Activated CD8-positive, alpha-beta T cell treated with anti-CD3 and anti-CD28 coated beads for 36 hours (primary cell): ENCODE measurements at regions of chr1 and their contacts with region 1.

Region 1: DNA sequence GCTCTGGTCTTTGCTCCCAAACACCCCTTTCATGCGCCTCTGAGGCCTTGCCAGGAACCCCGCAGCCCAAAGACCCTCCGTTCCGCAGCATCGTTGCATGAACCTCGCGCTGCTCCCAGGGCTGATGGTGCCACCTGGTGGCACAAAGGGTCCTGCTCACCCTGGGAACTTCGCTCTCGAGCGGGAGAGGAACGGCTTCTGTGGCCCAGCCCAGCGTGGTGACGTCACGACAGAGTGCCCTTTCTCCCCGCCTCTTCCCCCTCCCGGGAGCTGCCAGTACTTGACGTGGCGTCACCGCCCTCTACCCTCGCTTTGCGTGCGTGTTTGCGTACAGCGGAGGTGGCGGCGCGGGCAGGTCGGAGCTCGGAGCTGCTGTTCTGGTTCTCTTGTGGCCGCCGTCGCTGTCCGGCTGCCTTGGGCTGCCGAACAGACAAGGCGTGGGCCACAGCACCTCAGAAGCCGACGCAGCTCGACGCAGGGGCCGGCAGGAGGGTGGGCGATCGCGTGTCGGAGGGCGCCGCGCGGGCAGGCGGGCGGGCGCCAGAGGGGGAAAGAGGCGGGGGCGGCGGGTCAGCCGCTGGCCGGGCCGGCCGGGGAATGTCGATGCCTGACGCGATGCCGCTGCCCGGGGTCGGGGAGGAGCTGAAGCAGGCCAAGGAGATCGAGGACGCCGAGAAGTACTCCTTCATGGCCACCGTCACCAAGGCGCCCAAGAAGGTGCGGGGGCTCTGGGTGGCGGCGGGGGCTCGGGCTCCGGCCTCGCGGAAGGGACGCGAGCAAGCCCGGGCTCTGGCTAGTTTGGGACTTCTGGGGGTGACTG is at the start of gene AHCYL1:
- DNase-seq: peak; percentile 100
- ATAC-seq: peak; percentile 99
- H3K4me3 Mint-ChIP-seq: peak within 1 kb of the TSS; percentile 98
- H3K27ac Mint-ChIP-seq: peak within 1 kb of the TSS; percentile 98
- H3K4me1 Mint-ChIP-seq: peaks cover 33% of the 10 kb centered on the region
- H3K27me3 Mint-ChIP-seq: no peaks in the 10 kb centered on the region
- CTCF ChIP-seq: peak; percentile 84
- total RNA-seq, gene AHCYL1: 77.8 to 79.1 TPM

Region 2: GRCh38 chr1:109516872-109517271 is 467.8 kb before region 1 on chr1:
- CTCF ChIA-PET with region 1: no interaction called
- POLR2A ChIA-PET with region 1: no interaction called
- intact Hi-C with region 1: no loop called
- DNase-seq: no peak
- ATAC-seq: no peak
- H3K4me3 Mint-ChIP-seq: no peak overlapping the region
- H3K27ac Mint-ChIP-seq: no peak overlapping the region
- H3K4me1 Mint-ChIP-seq: peaks cover 2% of the 10 kb centered on the region
- H3K27me3 Mint-ChIP-seq: no peaks in the 10 kb centered on the region
- CTCF ChIP-seq: no peak

Region 3: DNA sequence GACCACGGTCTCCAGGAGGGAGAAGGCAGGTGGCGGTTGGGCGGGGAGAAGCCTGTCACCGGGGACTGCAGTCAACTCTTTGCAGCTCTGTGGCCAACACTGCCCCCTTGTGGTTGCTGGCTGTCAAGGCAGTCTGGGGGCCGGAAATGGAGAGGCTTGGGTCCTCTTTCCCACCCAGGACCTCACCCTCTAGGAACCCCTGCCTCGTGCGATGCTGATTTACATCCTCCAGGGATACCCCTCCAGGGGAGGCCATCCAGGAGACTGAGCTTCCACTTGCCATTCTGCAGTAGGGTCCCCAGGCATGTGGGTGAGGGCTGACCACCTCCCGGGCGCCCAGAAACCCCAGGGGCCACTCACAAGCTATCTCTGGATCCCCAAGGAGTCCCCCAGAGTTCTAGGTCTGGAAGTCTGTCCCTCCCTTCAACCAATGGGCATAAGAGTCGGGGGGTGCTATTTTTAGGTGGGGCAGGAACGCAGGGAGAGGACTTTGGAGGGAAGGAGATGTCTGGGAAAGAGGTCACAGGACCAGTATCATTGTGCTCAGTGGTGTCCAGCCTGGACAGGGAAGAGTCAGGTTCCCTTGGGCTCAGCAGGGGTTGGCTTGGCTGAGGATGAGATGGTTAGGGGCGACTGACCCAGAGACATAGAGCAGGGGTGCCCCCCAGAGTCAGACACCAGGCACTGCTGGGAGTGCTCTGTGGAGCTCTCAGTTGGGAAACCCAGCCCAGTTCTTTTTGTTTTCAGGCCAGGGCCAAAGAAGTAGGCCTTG is 452.1 kb before region 1 on chr1:
- CTCF ChIA-PET with region 1: interaction called, 11 read pairs
- POLR2A ChIA-PET with region 1: no interaction called
- intact Hi-C with region 1: no loop called
- DNase-seq: peak; percentile 93
- ATAC-seq: peak; percentile 93
- H3K4me3 Mint-ChIP-seq: peak overlapping the region; percentile 57
- H3K27ac Mint-ChIP-seq: peak overlapping the region; percentile 90
- H3K4me1 Mint-ChIP-seq: peaks cover 23% of the 10 kb centered on the region
- H3K27me3 Mint-ChIP-seq: no peaks in the 10 kb centered on the region
- CTCF ChIP-seq: peak; percentile 79

Region 4: GRCh38 chr1:109655601-109656519 is 328.8 kb before region 1 on chr1 and contains the start of gene GSTM4:
- CTCF ChIA-PET with region 1: interaction called, 20 read pairs
- POLR2A ChIA-PET with region 1: interaction called, 9 read pairs
- intact Hi-C with region 1: no loop called
- DNase-seq: peak; percentile 81
- ATAC-seq: peak; percentile 94
- H3K4me3 Mint-ChIP-seq: peak within 1 kb of the TSS; percentile 78
- H3K27ac Mint-ChIP-seq: peak within 1 kb of the TSS; percentile 83
- H3K4me1 Mint-ChIP-seq: peaks cover 6% of the 10 kb centered on the region
- H3K27me3 Mint-ChIP-seq: peaks cover 2% of the 10 kb centered on the region
- CTCF ChIP-seq: no peak
- total RNA-seq, gene GSTM4: 8.3 to 10.5 TPM

Region 5: GRCh38 chr1:109796484-109797302 is 188.0 kb before region 1 on chr1:
- CTCF ChIA-PET with region 1: interaction called, 745 read pairs
- POLR2A ChIA-PET with region 1: interaction called, 14 read pairs
- intact Hi-C with region 1: no loop called
- DNase-seq: peak; percentile 28
- ATAC-seq: peak; percentile 54
- H3K4me3 Mint-ChIP-seq: no peak overlapping the region
- H3K27ac Mint-ChIP-seq: peak overlapping the region; percentile 73
- H3K4me1 Mint-ChIP-seq: peaks cover 71% of the 10 kb centered on the region
- H3K27me3 Mint-ChIP-seq: no peaks in the 10 kb centered on the region
- CTCF ChIP-seq: no peak

Region 6: DNA sequence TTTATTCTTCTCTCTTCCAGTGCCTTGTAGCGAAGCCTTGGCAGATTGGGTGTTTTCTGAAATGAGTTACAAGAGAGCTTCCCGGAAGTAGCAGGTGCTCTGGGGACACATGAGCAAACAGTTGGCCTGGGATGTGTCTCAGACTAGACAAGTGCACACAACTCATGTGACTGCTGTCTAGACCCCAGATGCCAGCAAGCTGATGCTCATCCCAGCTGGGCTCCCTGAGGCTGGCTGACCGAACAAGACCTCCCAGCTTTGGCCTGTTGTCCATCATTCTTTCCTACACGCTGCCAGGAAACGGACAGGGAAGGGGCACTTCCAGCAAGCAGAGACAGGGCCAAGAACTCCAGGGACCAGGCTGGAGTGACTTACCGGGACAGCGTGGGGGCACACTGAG is 92.7 kb before region 1 on chr1:
- CTCF ChIA-PET with region 1: interaction called, 21 read pairs
- POLR2A ChIA-PET with region 1: interaction called, 5 read pairs
- intact Hi-C with region 1: no loop called
- DNase-seq: no peak
- ATAC-seq: no peak
- H3K4me3 Mint-ChIP-seq: no peak overlapping the region
- H3K27ac Mint-ChIP-seq: no peak overlapping the region
- H3K4me1 Mint-ChIP-seq: peaks cover 34% of the 10 kb centered on the region
- H3K27me3 Mint-ChIP-seq: no peaks in the 10 kb centered on the region
- CTCF ChIP-seq: no peak

Region 7: DNA sequence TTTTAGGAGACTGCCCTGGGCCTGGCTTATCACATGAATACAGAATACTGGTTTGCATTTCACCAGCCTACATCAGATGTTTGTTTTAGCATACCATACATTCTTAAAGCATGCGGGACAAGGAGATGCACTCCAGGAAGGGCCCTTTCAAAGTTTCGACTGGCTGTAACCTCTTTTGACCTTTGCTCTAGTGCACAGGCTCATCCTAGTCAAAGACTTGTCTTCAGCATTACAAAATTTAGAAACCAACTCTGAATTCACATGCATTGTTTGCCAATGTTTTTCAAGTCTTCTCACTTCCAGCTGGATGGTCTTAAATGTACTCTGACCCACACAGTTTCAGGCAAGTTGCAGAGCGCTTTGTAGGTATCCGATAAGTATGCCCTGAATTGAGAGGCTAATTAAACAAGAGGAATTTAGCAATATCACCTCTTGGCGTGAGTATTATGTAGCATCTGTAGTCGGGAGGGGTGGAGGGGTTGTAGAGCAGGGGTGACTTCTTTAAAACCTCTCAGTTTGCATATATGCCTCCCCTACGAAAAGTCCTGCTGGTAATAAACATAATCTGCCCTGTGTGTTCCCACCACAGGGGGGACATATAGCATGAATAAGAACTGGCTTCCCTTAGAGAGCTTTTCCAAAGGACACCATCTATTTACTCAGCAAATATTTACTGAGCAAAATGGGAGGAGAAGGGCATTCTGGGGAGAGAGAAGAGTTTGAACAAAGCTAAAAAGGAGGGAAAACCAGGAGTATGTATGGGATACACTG is 24.5 kb before region 1 on chr1:
- CTCF ChIA-PET with region 1: interaction called, 39 read pairs
- POLR2A ChIA-PET with region 1: no interaction called
- intact Hi-C with region 1: no loop called
- DNase-seq: no peak
- ATAC-seq: no peak
- H3K4me3 Mint-ChIP-seq: no peak overlapping the region
- H3K27ac Mint-ChIP-seq: no peak overlapping the region
- H3K4me1 Mint-ChIP-seq: no peaks in the 10 kb centered on the region
- H3K27me3 Mint-ChIP-seq: peaks cover 7% of the 10 kb centered on the region
- CTCF ChIP-seq: no peak